ENCODE measurements at regions of chr14 and their contacts with region 1.

Region 1: DNA sequence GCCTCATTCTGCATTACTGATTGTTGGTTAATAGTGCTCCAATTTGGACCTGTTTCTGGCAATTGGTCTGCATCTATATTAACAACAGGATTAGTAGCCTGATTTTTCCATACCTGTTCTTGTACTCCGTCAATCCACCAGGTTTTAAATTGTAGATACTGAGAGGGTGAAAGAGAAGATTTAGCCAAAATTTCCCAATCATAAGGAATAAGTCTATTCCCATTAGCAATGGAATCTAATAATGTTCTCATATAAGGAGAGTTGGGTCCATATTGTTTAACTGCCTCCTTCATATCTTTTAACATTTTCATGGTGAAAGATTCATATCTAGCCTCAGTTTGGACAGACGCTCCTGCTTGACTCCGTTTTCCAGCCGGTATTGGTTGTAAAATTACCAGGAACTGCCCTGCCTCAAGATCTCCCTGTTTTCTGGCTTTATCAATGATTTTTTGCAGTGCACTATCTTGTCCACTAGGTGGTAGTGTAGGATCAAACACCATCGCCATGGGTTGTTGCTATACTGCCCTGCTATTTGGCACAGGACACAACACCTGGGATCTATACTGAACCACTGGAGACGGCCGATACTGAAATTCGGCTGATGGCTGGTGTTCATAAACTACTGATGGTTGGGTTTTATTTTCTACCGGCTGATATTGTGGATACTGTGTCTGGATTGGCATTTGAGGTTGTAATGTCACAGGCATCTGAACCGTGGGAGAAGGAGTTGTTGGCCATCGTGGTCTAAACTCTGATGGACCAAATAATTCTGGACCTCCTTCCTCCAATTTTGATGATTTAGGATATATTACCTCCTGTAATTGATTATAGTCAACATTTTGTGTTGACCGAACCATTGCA is 25.2 kb downstream of the DHRS4L2 start:
- DNase-seq: no peak
- ATAC-seq: peak; percentile 97
- H3K4me3 Mint-ChIP-seq: no peak overlapping the region
- H3K27ac Mint-ChIP-seq: no peak overlapping the region
- H3K4me1 Mint-ChIP-seq: peaks cover 20% of the 10 kb centered on the region
- H3K27me3 Mint-ChIP-seq: no peaks in the 10 kb centered on the region
- CTCF ChIP-seq: peak; percentile 48

Region 2: GRCh38 chr14:24036169-24036962 is 22.5 kb after region 1 on chr14:
- CTCF ChIA-PET with region 1: interaction called, 4 read pairs
- POLR2A ChIA-PET with region 1: no interaction called
- intact Hi-C with region 1: loop called (anchors 1 kb)
- DNase-seq: peak; percentile 50
- ATAC-seq: peak; percentile 76
- H3K4me3 Mint-ChIP-seq: peak overlapping the region; percentile 89
- H3K27ac Mint-ChIP-seq: peak overlapping the region; percentile 62
- H3K4me1 Mint-ChIP-seq: peaks cover 7% of the 10 kb centered on the region
- H3K27me3 Mint-ChIP-seq: no peaks in the 10 kb centered on the region
- CTCF ChIP-seq: no peak

Region 3: GRCh38 chr14:24058260-24058950 is 44.5 kb after region 1 on chr14:
- CTCF ChIA-PET with region 1: interaction called, 3 read pairs
- POLR2A ChIA-PET with region 1: no interaction called
- intact Hi-C with region 1: loop called (anchors 1 kb)
- DNase-seq: no peak
- ATAC-seq: peak; percentile 84
- H3K4me3 Mint-ChIP-seq: no peak overlapping the region
- H3K27ac Mint-ChIP-seq: no peak overlapping the region
- H3K4me1 Mint-ChIP-seq: peaks cover 2% of the 10 kb centered on the region
- H3K27me3 Mint-ChIP-seq: no peaks in the 10 kb centered on the region
- CTCF ChIP-seq: no peak

Region 4: DNA sequence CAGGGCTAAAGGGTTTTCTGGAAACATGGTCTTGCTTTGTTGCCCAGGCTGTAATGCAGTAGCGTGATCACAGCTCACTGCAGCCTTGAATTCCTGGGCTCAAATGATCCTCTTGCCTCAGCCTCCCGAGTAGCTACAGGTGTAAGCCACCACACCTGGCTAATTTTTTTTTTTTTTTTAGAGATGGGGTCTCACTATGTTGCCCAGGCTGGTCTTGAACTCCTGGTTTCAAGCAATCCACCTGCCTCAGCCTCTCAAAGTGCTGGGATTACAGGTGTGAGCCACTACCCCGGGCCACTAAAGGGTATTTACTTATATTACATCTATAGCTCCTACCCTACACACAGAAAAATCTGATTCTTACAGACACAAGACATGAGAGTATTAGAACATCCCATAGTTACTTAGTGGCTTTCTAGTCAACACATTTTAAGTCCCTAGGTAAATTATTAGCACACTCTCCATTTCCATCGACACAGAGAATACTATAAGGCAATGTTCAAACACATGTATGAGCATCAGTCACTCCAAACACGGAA is 94.5 kb after region 1 on chr14:
- CTCF ChIA-PET with region 1: interaction called, 14 read pairs
- POLR2A ChIA-PET with region 1: no interaction called
- intact Hi-C with region 1: no loop called
- DNase-seq: no peak
- ATAC-seq: no peak
- H3K4me3 Mint-ChIP-seq: no peak overlapping the region
- H3K27ac Mint-ChIP-seq: peak overlapping the region; percentile 90
- H3K4me1 Mint-ChIP-seq: peaks cover 12% of the 10 kb centered on the region
- H3K27me3 Mint-ChIP-seq: no peaks in the 10 kb centered on the region
- CTCF ChIP-seq: no peak

Region 5: GRCh38 chr14:24141097-24141880 is 127.4 kb after region 1 on chr14 and contains the start of gene EMC9:
- CTCF ChIA-PET with region 1: no interaction called
- POLR2A ChIA-PET with region 1: no interaction called
- intact Hi-C with region 1: loop called (anchors 1 kb)
- DNase-seq: peak; percentile 92
- ATAC-seq: peak; percentile 90
- H3K4me3 Mint-ChIP-seq: peak within 1 kb of the TSS; percentile 83
- H3K27ac Mint-ChIP-seq: peak within 1 kb of the TSS; percentile 87
- H3K4me1 Mint-ChIP-seq: peaks cover 78% of the 10 kb centered on the region
- H3K27me3 Mint-ChIP-seq: no peaks in the 10 kb centered on the region
- CTCF ChIP-seq: no peak
- total RNA-seq, gene EMC9: 22.5 and 22.6 TPM in 2 replicates

Region 6: GRCh38 chr14:24310646-24311604 is 297.0 kb after region 1 on chr14 and contains the start of gene LTB4R:
- CTCF ChIA-PET with region 1: no interaction called
- POLR2A ChIA-PET with region 1: no interaction called
- intact Hi-C with region 1: loop called (anchors 1 kb)
- DNase-seq: peak; percentile 73
- ATAC-seq: peak; percentile 78
- H3K4me3 Mint-ChIP-seq: peak within 1 kb of the TSS; percentile 75
- H3K27ac Mint-ChIP-seq: peak within 1 kb of the TSS; percentile 80
- H3K4me1 Mint-ChIP-seq: peaks cover 59% of the 10 kb centered on the region
- H3K27me3 Mint-ChIP-seq: no peaks in the 10 kb centered on the region
- CTCF ChIP-seq: no peak
- total RNA-seq, gene LTB4R: 8.2 and 8.6 TPM in 2 replicates

Region 7: GRCh38 chr14:24332268-24332993 is 318.5 kb after region 1 on chr14:
- CTCF ChIA-PET with region 1: no interaction called
- POLR2A ChIA-PET with region 1: no interaction called
- intact Hi-C with region 1: loop called (anchors 1 kb)
- DNase-seq: peak; percentile 63
- ATAC-seq: peak; percentile 95
- H3K4me3 Mint-ChIP-seq: peak overlapping the region; percentile 83
- H3K27ac Mint-ChIP-seq: peak overlapping the region; percentile 42
- H3K4me1 Mint-ChIP-seq: peaks cover 39% of the 10 kb centered on the region
- H3K27me3 Mint-ChIP-seq: peaks cover 14% of the 10 kb centered on the region
- CTCF ChIP-seq: no peak

Region 8: GRCh38 chr14:24542346-24542936 is 528.6 kb after region 1 on chr14:
- CTCF ChIA-PET with region 1: no interaction called
- POLR2A ChIA-PET with region 1: no interaction called
- intact Hi-C with region 1: no loop called
- DNase-seq: no peak
- ATAC-seq: no peak
- H3K4me3 Mint-ChIP-seq: no peak overlapping the region
- H3K27ac Mint-ChIP-seq: no peak overlapping the region
- H3K4me1 Mint-ChIP-seq: no peaks in the 10 kb centered on the region
- H3K27me3 Mint-ChIP-seq: peaks cover 20% of the 10 kb centered on the region
- CTCF ChIP-seq: no peak

Measured in activated B cell treated with CpG ODN at 0.5 μM for 24 hours (primary cell).